ENCODE measurements at regions of chr17 and their contacts with region 1.

Region 1: GRCh38 chr17:80575057-80575875 is 30.6 kb downstream of the RPTOR start:
- DNase-seq: peak; percentile 97
- H3K4me3 Mint-ChIP-seq: no peak overlapping the region
- H3K27ac Mint-ChIP-seq: no peak overlapping the region
- H3K4me1 Mint-ChIP-seq: peaks cover 24% of the 10 kb centered on the region
- H3K27me3 Mint-ChIP-seq: no peaks in the 10 kb centered on the region

Region 2: GRCh38 chr17:80169784-80170500 is 405.3 kb before region 1 on chr17 and contains the start of gene CARD14:
- CTCF ChIA-PET with region 1: no interaction called
- intact Hi-C with region 1: no loop called
- DNase-seq: no peak
- H3K4me3 Mint-ChIP-seq: no peak within 1 kb of the TSS
- H3K27ac Mint-ChIP-seq: no peak within 1 kb of the TSS
- H3K4me1 Mint-ChIP-seq: no peaks in the 10 kb centered on the region
- H3K27me3 Mint-ChIP-seq: no peaks in the 10 kb centered on the region
- total RNA-seq, gene CARD14: not detected

Region 3: GRCh38 chr17:80477647-80478478 is 97.4 kb before region 1 on chr17:
- CTCF ChIA-PET with region 1: interaction called, 3 read pairs
- intact Hi-C with region 1: loop called (anchors 2 kb)
- DNase-seq: peak; percentile 65
- H3K4me3 Mint-ChIP-seq: no peak overlapping the region
- H3K27ac Mint-ChIP-seq: no peak overlapping the region
- H3K4me1 Mint-ChIP-seq: peaks cover 14% of the 10 kb centered on the region
- H3K27me3 Mint-ChIP-seq: peaks cover 59% of the 10 kb centered on the region

Region 4: GRCh38 chr17:80544655-80545498 is 30.4 kb before region 1 on chr17 and contains the start of gene RPTOR:
- CTCF ChIA-PET with region 1: interaction called, 4 read pairs
- intact Hi-C with region 1: loop called (anchors 1 kb)
- DNase-seq: peak; percentile 97
- H3K4me3 Mint-ChIP-seq: peak within 1 kb of the TSS; percentile 96
- H3K27ac Mint-ChIP-seq: peak within 1 kb of the TSS; percentile 88
- H3K4me1 Mint-ChIP-seq: peaks cover 36% of the 10 kb centered on the region
- H3K27me3 Mint-ChIP-seq: peaks cover 2% of the 10 kb centered on the region
- total RNA-seq, gene RPTOR: 32.4 to 35.4 TPM

Region 5: DNA sequence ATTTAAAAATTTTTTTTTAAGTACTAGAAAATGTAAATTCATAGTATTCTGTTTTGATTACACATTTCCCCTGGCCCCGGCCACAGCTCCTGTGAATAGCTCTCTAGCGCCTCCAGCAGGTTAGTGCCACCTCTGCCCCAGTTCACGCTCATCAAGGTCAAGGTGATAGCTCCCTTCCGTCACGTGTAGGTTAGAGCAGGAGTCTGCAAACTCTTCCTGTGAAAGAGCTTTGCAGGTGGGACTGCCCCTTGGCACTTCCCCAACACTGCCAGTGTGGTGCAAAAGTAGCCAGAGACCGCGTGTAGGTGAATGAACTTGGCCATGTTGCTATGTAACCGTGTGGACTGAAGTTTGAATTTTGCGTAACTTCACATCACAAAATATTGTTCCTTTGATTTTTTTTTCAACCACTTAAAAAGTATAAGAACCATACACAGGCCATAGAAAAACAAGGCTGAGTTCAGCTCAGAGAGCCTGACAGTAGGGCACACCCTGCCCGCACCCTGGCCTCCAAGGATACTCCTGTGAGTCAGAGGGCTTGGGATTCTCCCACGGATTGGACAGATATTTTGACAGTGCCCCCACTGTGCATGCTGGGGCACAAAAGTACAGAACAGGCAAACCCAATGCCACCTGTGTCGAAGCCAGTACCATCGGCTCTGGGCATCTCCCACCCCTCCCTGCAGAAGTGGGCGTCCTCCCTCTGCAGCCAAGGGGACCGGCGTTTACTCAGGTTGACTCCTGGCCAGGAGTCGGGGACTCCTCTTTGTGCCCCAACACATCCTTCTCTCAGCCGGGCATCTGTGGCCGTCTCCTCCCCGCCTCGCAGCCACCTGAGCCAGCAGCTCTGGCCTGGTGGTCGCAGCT is 324.4 kb after region 1 on chr17:
- CTCF ChIA-PET with region 1: interaction called, 5 read pairs
- intact Hi-C with region 1: loop called (anchors 2 kb)
- DNase-seq: peak; percentile 93
- H3K4me3 Mint-ChIP-seq: no peak overlapping the region
- H3K27ac Mint-ChIP-seq: no peak overlapping the region
- H3K4me1 Mint-ChIP-seq: peaks cover 38% of the 10 kb centered on the region
- H3K27me3 Mint-ChIP-seq: no peaks in the 10 kb centered on the region

Region 6: DNA sequence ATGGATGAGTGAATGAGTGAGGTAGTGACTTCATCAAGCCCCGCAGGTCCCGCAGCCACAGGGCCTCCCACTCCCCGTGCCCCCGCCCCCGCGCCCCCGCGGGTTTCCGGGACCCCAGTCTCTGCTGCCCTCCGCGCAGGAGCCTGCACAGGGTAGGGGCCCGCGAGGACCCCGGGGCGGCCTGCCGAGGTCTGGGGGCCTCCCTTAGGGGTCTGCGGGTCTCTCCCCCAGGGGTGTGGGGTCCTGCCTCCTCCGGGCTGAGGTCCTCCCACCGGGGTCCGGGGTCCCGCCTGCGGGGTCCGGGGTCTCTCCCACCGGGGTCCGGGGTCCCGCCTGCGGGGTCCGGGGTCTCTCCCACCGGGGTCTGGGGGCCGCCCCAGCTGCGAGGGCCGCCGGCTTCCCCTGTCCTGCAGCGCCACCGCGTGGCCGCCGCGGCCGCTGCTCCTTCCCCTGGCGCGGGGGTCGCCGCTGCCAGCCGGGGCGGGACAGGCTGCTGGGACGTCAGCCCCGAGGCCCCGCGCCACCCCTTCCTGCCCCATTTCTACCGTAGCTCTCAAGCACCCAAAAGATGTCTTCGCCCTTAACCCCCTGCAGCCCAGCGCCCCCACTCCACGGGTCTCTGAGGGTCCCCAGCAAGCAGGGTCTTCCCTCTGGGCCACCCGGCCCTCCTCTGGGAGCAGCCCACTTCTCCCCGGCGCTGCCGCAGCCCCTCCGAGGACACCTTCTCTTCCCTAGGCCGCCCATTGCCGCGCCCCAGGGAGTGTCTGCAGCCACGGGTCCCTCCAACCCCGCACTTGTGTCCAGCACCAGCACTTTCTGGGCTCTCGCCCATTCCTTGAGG is 406.0 kb after region 1 on chr17:
- CTCF ChIA-PET with region 1: no interaction called
- intact Hi-C with region 1: loop called (anchors 5 kb)
- DNase-seq: peak; percentile 27
- H3K4me3 Mint-ChIP-seq: no peak overlapping the region
- H3K27ac Mint-ChIP-seq: no peak overlapping the region
- H3K4me1 Mint-ChIP-seq: peaks cover 12% of the 10 kb centered on the region
- H3K27me3 Mint-ChIP-seq: no peaks in the 10 kb centered on the region

Measured in activated naive CD4-positive, alpha-beta T cell treated with anti-CD3 and anti-CD28 coated beads for 36 hours (primary cell).